IMR-90 (cell line): ENCODE measurements at regions of chr6 and their contacts with region 1.

Region 1: GRCh38 chr6:41027799-41028628 is 11.0 kb downstream of the UNC5CL start:
- DNase-seq: peak; percentile 44
- ATAC-seq: peak; percentile 99
- H3K4me3 ChIP-seq: peak overlapping the region; percentile 40
- H3K27ac ChIP-seq: no peak overlapping the region
- H3K4me1 ChIP-seq: peaks cover 4% of the 10 kb centered on the region; the same call in 1 of the 2 replicates
- H3K27me3 ChIP-seq: peaks cover 7% of the 10 kb centered on the region; the same call in 1 of the 2 replicates
- CTCF ChIP-seq: peak; percentile 98
- POLR2A ChIP-seq: 0 out of 2 replicates have a peak, but pooled peaks have one; percentile 32
- RAD21 ChIP-seq: peak; percentile 97

Region 2: GRCh38 chr6:39361657-39362486 is 1666.1 kb before region 1 on chr6:
- CTCF ChIA-PET with region 1: no interaction called
- POLR2A ChIA-PET with region 1: no interaction called
- dilution Hi-C with region 1: no loop called
- in situ Hi-C with region 1: loop called (anchors 25 kb)
- intact Hi-C with region 1: no loop called
- DNase-seq: peak; percentile 58
- ATAC-seq: peak; percentile 98
- H3K4me3 ChIP-seq: no peak overlapping the region
- H3K27ac ChIP-seq: no peak overlapping the region
- H3K4me1 ChIP-seq: no peaks in the 10 kb centered on the region; the same call in 1 of the 2 replicates
- H3K27me3 ChIP-seq: no peaks in the 10 kb centered on the region
- CTCF ChIP-seq: peak; percentile 75
- POLR2A ChIP-seq: no peak
- RAD21 ChIP-seq: peak; percentile 87

Region 3: DNA sequence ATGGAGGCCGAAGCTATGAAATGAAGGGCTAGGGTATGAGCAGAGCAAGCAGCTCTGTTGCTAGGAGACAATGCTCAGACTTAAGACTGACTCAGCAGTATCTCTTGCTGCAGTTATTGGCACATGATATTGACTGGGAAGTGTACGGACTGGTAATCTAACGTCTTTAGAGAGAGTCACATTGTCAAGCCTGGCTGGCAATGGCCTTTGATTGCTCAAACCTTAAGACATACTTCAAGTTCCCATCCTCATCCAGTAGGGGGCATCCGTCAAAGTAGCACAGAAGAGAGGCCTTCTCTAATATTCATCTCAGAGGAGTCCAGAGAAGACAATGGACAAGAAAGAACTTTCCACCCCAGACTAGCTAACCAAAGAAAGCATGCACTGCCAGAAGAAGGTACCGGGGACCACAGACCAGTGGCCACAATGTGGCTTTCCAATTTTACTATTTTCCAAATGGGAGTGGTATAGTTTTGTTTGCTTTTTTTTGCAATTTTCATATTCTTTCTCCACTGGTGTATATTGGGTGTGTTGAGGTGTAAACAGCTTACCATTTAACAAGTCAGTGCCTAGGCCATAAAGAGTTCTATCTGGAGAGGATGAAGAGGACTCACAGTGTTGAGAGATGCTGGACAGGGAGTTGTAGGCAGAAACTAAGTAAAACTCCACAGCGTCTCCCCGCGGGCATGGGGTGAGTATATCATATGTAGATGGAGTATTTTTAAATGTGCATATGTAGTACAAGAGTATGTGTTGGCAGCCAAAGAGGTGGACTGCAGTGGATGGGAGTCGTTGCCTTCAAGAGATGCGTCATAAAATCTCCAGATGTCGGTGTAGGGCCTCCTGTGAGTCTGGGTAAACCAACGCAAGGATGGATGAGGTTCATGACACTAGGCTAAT is 477.6 kb before region 1 on chr6:
- CTCF ChIA-PET with region 1: no interaction called
- POLR2A ChIA-PET with region 1: no interaction called
- dilution Hi-C with region 1: no loop called
- in situ Hi-C with region 1: loop called (anchors 10 kb)
- intact Hi-C with region 1: loop called (anchors 2 kb)
- DNase-seq: peak; percentile 59
- ATAC-seq: peak; percentile 82
- H3K4me3 ChIP-seq: no peak overlapping the region
- H3K27ac ChIP-seq: no peak overlapping the region
- H3K4me1 ChIP-seq: no peaks in the 10 kb centered on the region
- H3K27me3 ChIP-seq: no peaks in the 10 kb centered on the region; the same call in 1 of the 2 replicates
- CTCF ChIP-seq: peak; percentile 59
- POLR2A ChIP-seq: no peak
- RAD21 ChIP-seq: peak; percentile 47; the same call in 1 of the 2 replicates

Region 4: GRCh38 chr6:40930555-40930954 is 97.5 kb before region 1 on chr6:
- CTCF ChIA-PET with region 1: no interaction called
- POLR2A ChIA-PET with region 1: no interaction called
- dilution Hi-C with region 1: no loop called
- in situ Hi-C with region 1: no loop called
- intact Hi-C with region 1: no loop called
- DNase-seq: peak; percentile 20
- ATAC-seq: no peak
- H3K4me3 ChIP-seq: no peak overlapping the region
- H3K27ac ChIP-seq: no peak overlapping the region
- H3K4me1 ChIP-seq: peaks cover 11% of the 10 kb centered on the region; the same call in 1 of the 2 replicates
- H3K27me3 ChIP-seq: peaks cover 4% of the 10 kb centered on the region
- CTCF ChIP-seq: no peak
- POLR2A ChIP-seq: no peak
- RAD21 ChIP-seq: no peak

Region 5: DNA sequence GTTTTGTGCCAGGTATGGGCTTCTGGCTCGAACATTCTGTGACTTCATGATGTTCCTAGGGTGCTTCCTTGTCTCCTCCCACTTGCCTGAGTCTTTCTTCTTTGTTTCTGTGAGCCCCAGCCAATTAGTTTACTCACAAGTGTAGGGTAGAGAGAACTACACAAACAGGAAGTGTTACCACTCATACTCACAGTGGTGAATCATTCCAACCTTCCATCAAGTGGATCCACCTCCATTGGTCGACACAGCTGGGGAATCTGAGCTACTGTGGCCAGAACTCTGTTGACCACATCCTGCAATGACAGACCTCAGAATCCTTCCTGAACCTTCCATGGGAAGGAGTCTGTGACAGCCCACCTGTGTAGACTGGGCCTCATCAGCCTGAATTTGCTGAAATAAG is 65.8 kb before region 1 on chr6:
- CTCF ChIA-PET with region 1: no interaction called
- POLR2A ChIA-PET with region 1: no interaction called
- dilution Hi-C with region 1: no loop called
- in situ Hi-C with region 1: no loop called
- intact Hi-C with region 1: no loop called
- DNase-seq: peak; percentile 95
- ATAC-seq: peak; percentile 78
- H3K4me3 ChIP-seq: no peak overlapping the region
- H3K27ac ChIP-seq: no peak overlapping the region; the same call in 1 of the 2 replicates
- H3K4me1 ChIP-seq: peaks cover 14% of the 10 kb centered on the region
- H3K27me3 ChIP-seq: no peaks in the 10 kb centered on the region
- CTCF ChIP-seq: no peak
- POLR2A ChIP-seq: no peak
- RAD21 ChIP-seq: no peak

Region 6: DNA sequence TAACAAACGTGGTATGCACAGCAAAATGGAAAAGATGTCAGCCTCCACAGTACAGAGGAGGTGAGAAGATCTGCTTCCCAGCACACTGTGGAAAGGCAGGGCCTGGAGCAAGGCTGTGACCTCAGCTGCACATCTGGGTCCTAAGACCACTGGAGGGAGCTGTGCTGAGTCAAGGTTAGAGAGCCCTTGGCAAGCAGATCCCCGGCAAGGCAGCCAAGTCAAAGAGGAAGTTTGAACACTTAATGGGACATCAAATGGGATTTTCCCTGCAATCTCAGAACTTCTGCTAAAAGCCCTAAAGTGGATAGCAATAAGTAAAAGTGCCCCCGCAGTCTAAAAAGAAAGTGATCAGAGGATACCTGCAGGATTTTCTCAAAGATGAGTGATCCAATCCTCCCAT is 28.4 kb before region 1 on chr6:
- CTCF ChIA-PET with region 1: interaction called, 10 read pairs
- POLR2A ChIA-PET with region 1: no interaction called
- dilution Hi-C with region 1: no loop called
- in situ Hi-C with region 1: no loop called
- intact Hi-C with region 1: no loop called
- DNase-seq: peak; percentile 32
- ATAC-seq: no peak
- H3K4me3 ChIP-seq: no peak overlapping the region
- H3K27ac ChIP-seq: no peak overlapping the region
- H3K4me1 ChIP-seq: peaks cover 11% of the 10 kb centered on the region
- H3K27me3 ChIP-seq: peaks cover 24% of the 10 kb centered on the region
- CTCF ChIP-seq: peak; percentile 32; the same call in 1 of the 2 replicates
- POLR2A ChIP-seq: no peak
- RAD21 ChIP-seq: no peak